ENCODE measurements at regions of chr2 and their contacts with region 1.

Region 1: DNA sequence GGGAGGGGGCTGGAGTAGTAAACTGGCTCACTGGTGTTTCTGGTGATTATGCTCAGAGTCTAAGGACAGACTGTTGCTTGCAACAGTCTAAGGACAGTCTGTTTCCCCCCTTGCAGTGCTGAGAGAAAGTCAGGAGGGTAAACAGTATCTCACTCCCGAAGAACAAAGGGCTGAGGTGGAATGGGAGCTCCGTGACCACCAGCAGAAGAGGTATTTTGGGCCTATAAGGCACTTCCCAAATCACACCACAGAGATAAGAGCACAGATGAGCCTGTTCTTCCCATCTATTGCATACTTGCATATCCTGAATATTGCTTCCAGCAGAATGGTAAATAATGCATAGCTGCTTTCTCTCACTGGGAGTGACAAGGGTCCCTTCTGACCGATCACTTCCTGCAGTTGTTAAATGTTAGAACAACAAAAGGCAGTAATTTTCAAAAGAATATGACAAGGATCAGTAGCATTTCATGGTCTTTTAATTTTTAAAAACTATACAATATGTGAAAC is 160.4 kb upstream of the LYPD1 start:
- DNase-seq: no peak
- ATAC-seq: no peak
- H3K4me3 ChIP-seq: no peak overlapping the region
- H3K4me3 Mint-ChIP-seq: no peak overlapping the region
- H3K27ac ChIP-seq: no peak overlapping the region
- H3K27ac Mint-ChIP-seq: no peak overlapping the region
- H3K4me1 ChIP-seq: no peaks in the 10 kb centered on the region
- H3K4me1 Mint-ChIP-seq: no peaks in the 10 kb centered on the region
- H3K27me3 ChIP-seq: no peaks in the 10 kb centered on the region
- H3K27me3 Mint-ChIP-seq: no peaks in the 10 kb centered on the region
- CTCF ChIP-seq: no peak

Region 2: DNA sequence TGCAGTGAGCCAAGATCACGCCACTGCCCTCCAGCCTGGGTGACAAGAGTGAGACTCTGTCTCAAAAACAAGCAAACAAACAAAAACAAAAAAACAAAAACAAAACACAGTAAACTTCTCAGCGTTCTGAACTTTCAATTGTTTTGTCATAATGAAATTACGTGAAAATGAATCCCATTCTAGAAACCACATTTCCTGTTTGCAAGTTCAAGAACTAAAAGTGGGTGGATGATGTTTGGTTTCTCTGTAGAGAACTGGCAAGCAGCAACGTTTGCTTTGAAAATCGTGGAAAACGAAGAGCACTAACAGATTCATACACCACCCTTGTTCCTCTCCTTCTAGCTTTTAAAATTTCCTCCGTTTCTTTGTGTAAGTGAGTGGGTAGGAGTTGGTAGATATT is 65.7 kb after region 1 on chr2:
- CTCF ChIA-PET with region 1: no interaction called
- POLR2A ChIA-PET with region 1: no interaction called
- intact Hi-C with region 1: loop called in 1 of 2 experiments (anchors 2 kb)
- DNase-seq: no peak
- ATAC-seq: no peak
- H3K4me3 ChIP-seq: no peak overlapping the region
- H3K4me3 Mint-ChIP-seq: no peak overlapping the region
- H3K27ac ChIP-seq: no peak overlapping the region
- H3K27ac Mint-ChIP-seq: no peak overlapping the region
- H3K4me1 ChIP-seq: no peaks in the 10 kb centered on the region
- H3K4me1 Mint-ChIP-seq: no peaks in the 10 kb centered on the region
- H3K27me3 ChIP-seq: no peaks in the 10 kb centered on the region
- H3K27me3 Mint-ChIP-seq: no peaks in the 10 kb centered on the region
- CTCF ChIP-seq: no peak